Psoas muscle (tissue), 8 donors: ENCODE measurements at regions of chr9 and their contacts with region 1.

Region 1: GRCh38 chr9:13513716-13514444 is 234.4 kb upstream of the MPDZ start:
- DNase-seq: no peak
- ATAC-seq: peak in 2 of 4 donors; percentile 26 to 36
- H3K4me3 ChIP-seq: no peak overlapping the region
- H3K27ac ChIP-seq: peak overlapping the region; percentile 31
- H3K4me1 ChIP-seq: no peaks in the 10 kb centered on the region
- H3K27me3 ChIP-seq: no peaks in the 10 kb centered on the region
- CTCF ChIP-seq: no peak

Region 2: DNA sequence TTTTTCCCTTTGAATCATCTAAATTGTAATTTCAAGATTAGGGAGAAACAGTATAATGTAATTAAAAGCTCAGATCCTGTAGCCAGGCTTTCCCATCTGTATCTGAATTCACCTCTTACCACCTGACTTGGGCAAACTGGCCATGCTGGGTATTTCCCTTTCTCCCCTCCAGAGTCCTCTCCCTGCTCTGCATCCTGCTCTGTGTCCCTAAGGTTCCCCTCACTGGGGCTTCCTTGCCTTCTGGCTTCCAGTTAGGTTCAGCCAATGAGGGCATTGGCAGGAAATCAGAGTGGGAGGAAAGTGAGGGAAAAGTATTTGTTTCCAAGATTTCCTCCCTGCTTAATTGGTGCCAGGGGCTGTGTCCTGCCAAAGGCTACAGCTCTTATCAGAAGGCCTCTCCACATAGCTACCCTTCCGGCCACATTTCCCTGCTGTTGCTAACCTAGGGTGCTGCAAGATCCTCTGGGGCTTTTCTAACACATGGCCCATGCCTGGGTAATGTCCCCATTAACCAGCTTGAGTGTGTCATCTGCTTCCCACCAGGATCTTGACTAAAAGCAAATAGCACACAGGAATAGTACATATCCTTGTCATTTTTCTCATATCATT is 183.4 kb before region 1 on chr9:
- intact Hi-C with region 1: no loop called
- DNase-seq: no peak
- ATAC-seq: peak in 1 of 4 donors; percentile 21
- H3K4me3 ChIP-seq: no peak overlapping the region
- H3K27ac ChIP-seq: no peak overlapping the region
- H3K4me1 ChIP-seq: no peaks in the 10 kb centered on the region
- H3K27me3 ChIP-seq: no peaks in the 10 kb centered on the region
- CTCF ChIP-seq: no peak

Region 3: GRCh38 chr9:13485068-13485596 is 28.7 kb before region 1 on chr9:
- intact Hi-C with region 1: no loop called
- DNase-seq: peak; percentile 60 to 82
- ATAC-seq: peak; percentile 95 to 98 (median 97)
- H3K4me3 ChIP-seq: peak overlapping the region; percentile 11
- H3K27ac ChIP-seq: peak overlapping the region; percentile 78
- H3K4me1 ChIP-seq: peaks cover 32% of the 10 kb centered on the region
- H3K27me3 ChIP-seq: no peaks in the 10 kb centered on the region
- CTCF ChIP-seq: peak; percentile 16

Region 4: GRCh38 chr9:13570068-13570974 is 56.4 kb after region 1 on chr9:
- intact Hi-C with region 1: loop called in 1 of 2 experiments (anchors 10 kb)
- DNase-seq: no peak
- ATAC-seq: peak in 2 of 4 donors; percentile 25 to 33
- H3K4me3 ChIP-seq: no peak overlapping the region
- H3K27ac ChIP-seq: peak overlapping the region; percentile 43
- H3K4me1 ChIP-seq: peaks cover 20% of the 10 kb centered on the region
- H3K27me3 ChIP-seq: no peaks in the 10 kb centered on the region
- CTCF ChIP-seq: no peak

Region 5: GRCh38 chr9:13588151-13589033 is 74.5 kb after region 1 on chr9:
- intact Hi-C with region 1: loop called in 1 of 2 experiments (anchors 5 kb)
- DNase-seq: no peak
- ATAC-seq: peak in 1 of 4 donors; percentile 24
- H3K4me3 ChIP-seq: no peak overlapping the region
- H3K27ac ChIP-seq: peak overlapping the region; percentile 25
- H3K4me1 ChIP-seq: peaks cover 7% of the 10 kb centered on the region
- H3K27me3 ChIP-seq: no peaks in the 10 kb centered on the region
- CTCF ChIP-seq: no peak